Left cardiac atrium (tissue), 4 donors: ENCODE measurements at regions of chr5 and their contacts with region 1.

Region 1: DNA sequence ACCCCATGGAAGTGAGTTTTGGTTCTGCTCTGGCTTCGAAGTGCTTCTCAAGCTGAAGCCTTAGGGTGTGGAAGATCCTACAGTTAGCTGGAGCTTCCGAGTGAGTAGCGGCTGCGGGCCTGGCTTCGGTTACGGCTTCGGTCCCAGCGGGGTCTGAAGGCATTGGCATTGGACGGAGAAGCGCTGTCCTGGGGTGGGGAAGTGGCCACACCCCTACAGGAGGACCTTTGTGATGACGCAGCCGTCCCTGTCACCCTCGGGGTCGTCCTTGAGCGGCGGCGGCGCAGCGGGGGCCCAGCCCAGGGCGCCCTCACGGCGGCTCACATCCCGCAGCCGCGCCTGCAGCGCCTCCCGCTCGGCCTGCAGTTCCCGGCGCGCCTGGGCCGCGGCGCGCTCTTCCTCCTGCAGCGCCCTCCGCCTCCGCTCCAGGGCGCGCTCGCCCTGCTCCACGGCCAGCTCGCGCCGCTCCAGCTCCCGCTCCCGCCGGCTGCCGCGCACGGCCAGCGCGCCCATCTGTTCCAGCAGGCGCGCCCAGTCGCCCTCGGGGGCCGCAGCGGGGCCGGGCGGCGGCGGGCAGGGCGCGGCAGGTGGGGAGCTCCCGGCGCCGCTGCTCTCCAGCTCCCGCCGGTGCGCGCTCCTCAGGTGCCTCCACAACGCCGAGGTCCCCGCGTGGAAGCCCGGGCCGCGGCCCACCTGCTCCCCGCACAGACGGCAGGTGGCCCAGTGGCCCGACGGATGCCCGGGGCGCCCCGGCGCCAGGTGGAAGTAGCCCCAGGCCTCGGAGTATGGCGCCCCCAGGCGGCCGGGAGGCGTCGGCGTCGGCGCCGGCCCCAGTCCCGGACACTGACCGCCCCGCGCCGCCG is 9.9 kb downstream of the ZBED3 start:
- DNase-seq: peak; percentile 78
- ATAC-seq: peak; percentile 91 to 96

Region 2: DNA sequence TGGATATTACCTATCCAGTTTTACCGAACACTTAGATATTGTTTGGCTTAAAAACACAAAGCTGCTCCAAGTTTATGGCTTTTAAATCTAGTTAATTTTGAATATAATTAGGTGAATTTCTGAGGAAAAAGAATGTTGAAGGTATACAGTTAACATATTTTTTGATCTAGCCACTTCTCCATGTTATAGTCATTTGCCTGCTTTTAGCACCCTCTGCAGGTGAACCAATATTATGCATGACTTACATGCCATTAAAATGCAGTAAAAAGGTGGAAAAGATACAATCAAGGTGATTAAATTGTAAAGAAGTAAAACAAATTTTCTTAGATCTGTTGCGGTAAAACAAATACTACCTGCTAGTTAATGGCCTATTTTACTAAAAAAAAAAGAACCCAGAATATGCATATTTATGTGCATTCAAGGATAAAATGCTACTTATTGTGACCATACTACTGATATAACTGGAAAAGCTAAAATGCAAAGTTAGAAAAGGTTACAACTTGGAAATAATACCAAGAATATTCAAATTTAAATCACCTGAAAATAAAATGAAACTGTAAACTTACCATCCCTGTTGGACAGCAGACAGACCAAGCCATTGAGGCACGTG is 1085.2 kb after region 1 on chr5:
- intact Hi-C with region 1: loop called in 1 of 2 experiments (anchors 10 kb)
- DNase-seq: no peak
- ATAC-seq: no peak